Mammary epithelial cell (primary cell): ENCODE measurements at regions of chr12 and their contacts with region 1.

Region 1: DNA sequence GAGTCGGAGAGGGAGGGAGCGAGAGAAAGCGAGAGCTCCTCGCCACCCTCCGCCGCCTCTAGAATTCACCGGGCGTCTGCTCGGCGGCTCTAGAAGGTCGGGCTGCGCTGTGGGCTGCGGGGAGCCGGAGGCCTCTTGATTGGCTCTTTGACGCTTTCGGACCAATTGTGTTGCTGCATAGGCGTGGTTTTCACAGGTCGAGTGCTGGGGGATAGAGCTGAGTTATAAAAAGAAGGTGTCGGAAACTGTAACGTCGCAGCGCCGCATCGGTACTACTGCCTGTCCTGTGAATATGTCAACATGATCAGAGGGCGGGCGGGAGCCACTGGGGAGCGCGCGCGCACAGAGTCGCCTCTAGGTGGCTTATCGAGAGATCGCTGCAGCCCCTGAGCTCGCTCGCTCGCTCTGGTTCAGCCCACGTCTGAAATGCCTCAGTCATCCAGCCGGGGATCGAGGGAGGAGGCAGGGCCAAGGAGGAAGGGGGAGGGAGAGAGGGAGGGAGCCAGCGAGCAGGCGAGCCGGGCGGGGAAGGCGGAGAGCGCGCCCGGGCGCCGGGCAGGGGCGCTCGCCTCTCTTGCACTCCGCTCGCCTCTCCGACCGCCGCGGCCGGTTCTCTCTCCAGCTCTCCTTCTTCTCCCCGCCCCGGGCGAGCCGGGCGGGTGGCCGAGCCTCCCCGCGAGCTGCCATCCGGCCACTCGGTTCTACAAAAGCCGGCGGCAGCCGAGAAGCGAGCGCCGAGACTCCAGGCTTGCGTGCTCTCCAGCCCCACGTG is at the start of gene TBX3:
- DNase-seq: peak; percentile 100
- H3K4me3 ChIP-seq: peak within 1 kb of the TSS; percentile 66 to 100 (median 81)
- H3K27ac ChIP-seq: peak within 1 kb of the TSS; percentile 94
- H3K4me1 ChIP-seq: peaks cover 9% of the 10 kb centered on the region
- H3K27me3 ChIP-seq: no peaks in the 10 kb centered on the region
- CTCF ChIP-seq: peak; percentile 32 to 62
- total RNA-seq, gene TBX3: 30.7 to 33.8 TPM

Region 2: GRCh38 chr12:114625294-114625851 is 58.9 kb before region 1 on chr12:
- CTCF ChIA-PET with region 1: interaction called, 11 read pairs
- dilution Hi-C with region 1: no loop called
- in situ Hi-C with region 1: no loop called
- intact Hi-C with region 1: no loop called
- DNase-seq: peak; percentile 26
- H3K4me3 ChIP-seq: no peak overlapping the region
- H3K27ac ChIP-seq: no peak overlapping the region
- H3K4me1 ChIP-seq: peaks cover 3% of the 10 kb centered on the region
- H3K27me3 ChIP-seq: no peaks in the 10 kb centered on the region
- CTCF ChIP-seq: peak; percentile 90 to 93

Region 3: DNA sequence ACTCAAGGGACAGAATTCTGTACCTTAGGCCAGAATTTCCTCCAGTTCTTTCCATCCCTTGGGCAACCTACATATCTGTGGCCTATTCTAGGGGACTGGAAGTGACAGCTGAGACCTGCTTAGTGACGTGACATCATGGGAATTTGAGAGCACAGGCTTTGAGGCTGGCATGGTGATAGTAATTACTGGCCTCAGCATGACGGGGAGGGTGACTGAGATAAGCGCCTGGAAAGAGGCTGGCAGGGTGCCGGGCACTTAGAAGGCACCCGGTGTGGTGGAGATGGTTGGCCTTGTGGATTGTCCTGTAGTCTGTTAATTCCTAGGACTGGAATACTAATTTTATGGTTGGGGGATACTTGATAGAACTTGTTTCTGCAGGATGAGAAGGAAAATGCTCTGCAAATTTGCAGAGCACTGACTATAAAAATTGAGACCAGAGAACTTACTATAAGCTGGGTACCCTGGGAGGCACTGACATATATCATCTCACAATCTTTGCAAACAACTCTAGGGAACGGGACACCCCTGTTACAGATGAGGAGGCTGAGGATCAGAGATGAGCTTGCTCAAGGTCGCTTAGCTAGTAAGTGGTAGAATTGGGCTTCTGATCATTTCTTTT is 41.9 kb after region 1 on chr12:
- CTCF ChIA-PET with region 1: no interaction called
- dilution Hi-C with region 1: no loop called
- in situ Hi-C with region 1: no loop called
- intact Hi-C with region 1: no loop called
- DNase-seq: no peak
- H3K4me3 ChIP-seq: no peak overlapping the region
- H3K27ac ChIP-seq: no peak overlapping the region
- H3K4me1 ChIP-seq: no peaks in the 10 kb centered on the region
- H3K27me3 ChIP-seq: no peaks in the 10 kb centered on the region
- CTCF ChIP-seq: no peak

Region 4: GRCh38 chr12:114841557-114842251 is 157.4 kb after region 1 on chr12:
- CTCF ChIA-PET with region 1: no interaction called
- dilution Hi-C with region 1: no loop called
- in situ Hi-C with region 1: no loop called
- intact Hi-C with region 1: loop called (anchors 1 kb)
- DNase-seq: peak; percentile 97
- H3K4me3 ChIP-seq: no peak overlapping the region
- H3K27ac ChIP-seq: peak overlapping the region; percentile 80
- H3K4me1 ChIP-seq: peaks cover 3% of the 10 kb centered on the region
- H3K27me3 ChIP-seq: no peaks in the 10 kb centered on the region
- CTCF ChIP-seq: no peak

Region 5: DNA sequence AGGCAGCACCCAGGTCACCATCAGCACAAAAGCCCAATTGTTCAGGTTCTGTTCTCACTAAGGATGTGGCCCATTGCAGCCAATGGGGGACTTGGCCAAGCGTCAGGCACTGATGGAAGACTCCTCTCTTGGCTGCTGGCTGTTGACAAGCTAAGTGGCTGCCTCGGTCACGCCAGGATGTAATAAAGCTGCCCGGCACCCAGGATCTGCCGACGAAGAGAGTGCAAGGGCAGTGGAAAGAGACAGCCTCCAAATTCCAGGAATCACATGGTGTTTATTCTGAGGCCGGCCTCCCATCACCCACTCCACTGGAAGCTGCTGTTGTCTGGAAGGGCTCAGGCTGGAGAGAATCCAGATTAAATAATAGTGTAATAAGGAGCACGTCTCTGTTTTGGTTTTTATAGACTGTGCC is 451.5 kb after region 1 on chr12:
- CTCF ChIA-PET with region 1: no interaction called
- dilution Hi-C with region 1: no loop called
- in situ Hi-C with region 1: loop called in 1 of 2 experiments (anchors 25 kb)
- intact Hi-C with region 1: no loop called
- DNase-seq: no peak
- H3K4me3 ChIP-seq: no peak overlapping the region
- H3K27ac ChIP-seq: no peak overlapping the region
- H3K4me1 ChIP-seq: peaks cover 25% of the 10 kb centered on the region
- H3K27me3 ChIP-seq: no peaks in the 10 kb centered on the region
- CTCF ChIP-seq: no peak

Region 6: DNA sequence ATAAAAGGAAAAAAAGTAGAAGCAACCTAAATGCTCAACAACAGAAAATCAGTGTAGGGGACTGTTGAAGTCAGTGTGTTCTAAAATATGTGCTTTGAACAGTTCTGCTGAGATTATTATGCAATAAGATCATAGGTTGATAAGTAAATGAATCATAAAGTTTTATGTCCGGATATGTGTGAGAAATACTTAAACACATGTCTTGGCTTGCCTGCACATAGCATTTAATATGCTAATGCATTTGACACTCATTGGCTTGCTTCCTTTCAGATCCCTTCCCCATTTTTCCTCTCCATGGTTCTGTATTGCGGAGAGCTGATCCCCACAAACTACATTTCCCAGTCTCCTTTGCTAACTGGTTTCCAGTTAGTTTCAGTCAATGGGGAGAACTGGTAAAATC is 573.5 kb after region 1 on chr12:
- CTCF ChIA-PET with region 1: no interaction called
- dilution Hi-C with region 1: no loop called
- in situ Hi-C with region 1: loop called in 1 of 2 experiments (anchors 10 kb)
- intact Hi-C with region 1: loop called (anchors 5 kb)
- DNase-seq: peak; percentile 94
- H3K4me3 ChIP-seq: no peak overlapping the region
- H3K27ac ChIP-seq: no peak overlapping the region
- H3K4me1 ChIP-seq: peaks cover 22% of the 10 kb centered on the region
- H3K27me3 ChIP-seq: no peaks in the 10 kb centered on the region
- CTCF ChIP-seq: no peak

Region 7: DNA sequence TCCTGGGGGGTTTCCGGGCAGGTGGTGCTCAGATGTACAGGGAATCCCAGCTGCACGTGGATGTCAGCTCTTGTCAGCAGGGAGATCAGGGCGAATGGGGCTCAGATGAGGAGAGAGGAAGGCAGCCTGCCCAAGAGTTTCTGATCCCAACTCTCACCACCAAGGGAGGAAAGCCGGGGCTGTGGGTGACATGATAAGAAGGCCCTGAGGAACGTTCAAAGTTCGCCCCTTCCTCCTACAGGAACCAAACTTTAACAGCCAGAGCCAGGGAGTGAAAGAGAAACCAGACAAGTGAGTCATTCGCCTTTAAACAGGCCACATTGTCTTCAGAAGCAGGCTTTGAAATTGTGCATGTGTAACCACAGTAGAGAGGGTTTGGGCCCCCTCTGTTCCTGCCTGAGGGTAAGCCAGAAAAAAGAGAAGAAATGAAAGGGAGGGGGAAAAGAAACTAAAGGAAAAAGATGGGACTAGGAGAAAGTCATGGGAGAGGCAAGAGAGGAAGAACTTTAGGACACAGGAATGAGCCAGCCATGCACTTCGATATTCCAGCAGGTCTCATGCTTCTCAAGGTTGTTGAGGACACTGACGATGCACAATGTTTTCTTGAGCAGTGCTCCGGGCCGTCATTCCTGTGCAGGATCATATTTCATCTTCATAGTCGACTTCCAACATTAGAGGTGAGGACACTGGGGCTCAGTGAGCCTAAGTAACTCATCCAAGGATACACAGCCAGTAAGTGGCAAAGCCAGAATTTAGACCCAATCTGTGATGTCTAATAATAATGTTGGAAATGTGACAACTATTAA is 691.1 kb after region 1 on chr12:
- CTCF ChIA-PET with region 1: no interaction called
- dilution Hi-C with region 1: no loop called
- in situ Hi-C with region 1: loop called (anchors 25 kb)
- intact Hi-C with region 1: no loop called
- DNase-seq: peak; percentile 90
- H3K4me3 ChIP-seq: no peak overlapping the region
- H3K27ac ChIP-seq: peak overlapping the region; percentile 63
- H3K4me1 ChIP-seq: peaks cover 16% of the 10 kb centered on the region
- H3K27me3 ChIP-seq: no peaks in the 10 kb centered on the region
- CTCF ChIP-seq: no peak

Region 8: GRCh38 chr12:115451780-115452736 is 767.8 kb after region 1 on chr12:
- CTCF ChIA-PET with region 1: interaction called, 4 read pairs
- dilution Hi-C with region 1: no loop called
- in situ Hi-C with region 1: no loop called
- intact Hi-C with region 1: loop called (anchors 5 kb)
- DNase-seq: no peak
- H3K4me3 ChIP-seq: peak overlapping the region in 2 of 3 experiments; percentile 24 to 40
- H3K27ac ChIP-seq: no peak overlapping the region
- H3K4me1 ChIP-seq: peaks cover 4% of the 10 kb centered on the region
- H3K27me3 ChIP-seq: no peaks in the 10 kb centered on the region
- CTCF ChIP-seq: no peak